K562 (cell line): ENCODE measurements at regions of chr22 and their contacts with region 1.

Region 1: GRCh38 chr22:23069502-23070357 is 589 bp upstream of the GNAZ start:
- DNase-seq: peak; percentile 52 to 100 (median 100)
- ATAC-seq: peak; percentile 95
- H3K4me3 ChIP-seq: peak overlapping the region; percentile 33
- H3K27ac ChIP-seq: no peak overlapping the region
- H3K4me1 ChIP-seq: peaks cover 4 to 22% of the 10 kb centered on the region in 2 experiments; a peak in 4 of 5 replicates
- H3K27me3 ChIP-seq: peaks cover 73 to 93% of the 10 kb centered on the region in 2 experiments
- CTCF ChIP-seq: peak in 2 of 3 experiments; percentile 34 to 50; a peak in 3 of 6 replicates
- EP300 ChIP-seq: no peak
- POLR2A ChIP-seq: no peak
- RAD21 ChIP-seq: peak in 1 of 2 experiments; percentile 21; a peak in 1 of 4 replicates

Region 2: GRCh38 chr22:22817468-22818201 is 252.1 kb before region 1 on chr22:
- CTCF ChIA-PET with region 1: no interaction called
- POLR2A ChIA-PET with region 1: no interaction called
- in situ Hi-C with region 1: no loop called
- intact Hi-C with region 1: no loop called
- DNase-seq: peak; percentile 59 to 82 (median 80)
- ATAC-seq: peak; percentile 43
- H3K4me3 ChIP-seq: no peak overlapping the region
- H3K27ac ChIP-seq: no peak overlapping the region
- H3K4me1 ChIP-seq: no peaks in the 10 kb centered on the region
- H3K27me3 ChIP-seq: peaks cover 19 to 53% of the 10 kb centered on the region in 2 experiments; a peak in 4 of 5 replicates
- CTCF ChIP-seq: no peak
- EP300 ChIP-seq: no peak
- POLR2A ChIP-seq: no peak
- RAD21 ChIP-seq: no peak

Region 3: DNA sequence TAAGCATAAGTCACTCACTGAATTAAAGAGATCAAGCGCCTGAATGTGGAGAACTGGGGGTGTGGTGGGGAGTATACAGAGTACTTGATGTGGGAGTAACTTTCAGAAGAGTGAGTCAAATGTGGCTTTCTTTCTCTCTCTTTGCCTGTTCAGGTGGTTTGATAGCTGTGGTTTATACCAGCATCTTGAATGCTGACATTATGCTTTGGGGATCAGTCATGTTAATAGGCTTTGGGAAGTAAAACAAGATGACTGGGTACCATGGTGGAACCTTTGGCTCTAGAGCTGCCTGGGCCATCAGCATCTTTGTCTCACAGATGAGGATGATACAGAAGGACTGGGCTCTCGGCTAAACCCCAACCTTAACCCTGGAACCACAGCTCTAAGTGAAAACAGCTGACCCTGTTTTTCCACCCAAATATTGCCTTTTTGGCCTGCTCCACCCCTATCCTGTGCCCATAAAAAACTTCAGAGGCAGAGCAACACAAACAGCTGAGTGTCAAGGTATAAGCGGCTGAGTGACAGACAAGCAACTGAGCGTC is 57.6 kb before region 1 on chr22:
- CTCF ChIA-PET with region 1: no interaction called
- POLR2A ChIA-PET with region 1: interaction called, 10 read pairs
- in situ Hi-C with region 1: no loop called
- intact Hi-C with region 1: no loop called
- DNase-seq: peak in 2 of 4 experiments; percentile 40 to 46
- ATAC-seq: no peak
- H3K4me3 ChIP-seq: no peak overlapping the region
- H3K27ac ChIP-seq: no peak overlapping the region
- H3K4me1 ChIP-seq: peaks cover 0 to 5% of the 10 kb centered on the region in 2 experiments; a peak in 2 of 5 replicates
- H3K27me3 ChIP-seq: peaks cover 42 to 52% of the 10 kb centered on the region in 2 experiments
- CTCF ChIP-seq: no peak
- EP300 ChIP-seq: no peak
- POLR2A ChIP-seq: no peak
- RAD21 ChIP-seq: no peak

Region 4: GRCh38 chr22:23054531-23055257 is 15.0 kb before region 1 on chr22:
- CTCF ChIA-PET with region 1: no interaction called
- POLR2A ChIA-PET with region 1: interaction called, 37 read pairs
- in situ Hi-C with region 1: no loop called
- intact Hi-C with region 1: no loop called
- DNase-seq: peak in 1 of 4 experiments; percentile 55
- ATAC-seq: no peak
- H3K4me3 ChIP-seq: no peak overlapping the region
- H3K27ac ChIP-seq: no peak overlapping the region
- H3K4me1 ChIP-seq: peaks cover 0 to 3% of the 10 kb centered on the region in 2 experiments; a peak in 1 of 5 replicates
- H3K27me3 ChIP-seq: peaks cover 9 to 36% of the 10 kb centered on the region in 2 experiments; a peak in 4 of 5 replicates
- CTCF ChIP-seq: no peak
- EP300 ChIP-seq: no peak
- POLR2A ChIP-seq: no peak
- RAD21 ChIP-seq: no peak

Region 5: GRCh38 chr22:23098718-23099530 is 29.2 kb after region 1 on chr22:
- CTCF ChIA-PET with region 1: no interaction called
- POLR2A ChIA-PET with region 1: interaction called, 16 read pairs
- in situ Hi-C with region 1: no loop called
- intact Hi-C with region 1: no loop called
- DNase-seq: peak in 2 of 4 experiments; percentile 63
- ATAC-seq: no peak
- H3K4me3 ChIP-seq: no peak overlapping the region
- H3K27ac ChIP-seq: no peak overlapping the region
- H3K4me1 ChIP-seq: peaks cover 0 to 45% of the 10 kb centered on the region in 2 experiments; a peak in 3 of 5 replicates
- H3K27me3 ChIP-seq: peaks cover 95 to 100% of the 10 kb centered on the region in 2 experiments
- CTCF ChIP-seq: no peak
- EP300 ChIP-seq: no peak
- POLR2A ChIP-seq: no peak
- RAD21 ChIP-seq: no peak

Region 6: DNA sequence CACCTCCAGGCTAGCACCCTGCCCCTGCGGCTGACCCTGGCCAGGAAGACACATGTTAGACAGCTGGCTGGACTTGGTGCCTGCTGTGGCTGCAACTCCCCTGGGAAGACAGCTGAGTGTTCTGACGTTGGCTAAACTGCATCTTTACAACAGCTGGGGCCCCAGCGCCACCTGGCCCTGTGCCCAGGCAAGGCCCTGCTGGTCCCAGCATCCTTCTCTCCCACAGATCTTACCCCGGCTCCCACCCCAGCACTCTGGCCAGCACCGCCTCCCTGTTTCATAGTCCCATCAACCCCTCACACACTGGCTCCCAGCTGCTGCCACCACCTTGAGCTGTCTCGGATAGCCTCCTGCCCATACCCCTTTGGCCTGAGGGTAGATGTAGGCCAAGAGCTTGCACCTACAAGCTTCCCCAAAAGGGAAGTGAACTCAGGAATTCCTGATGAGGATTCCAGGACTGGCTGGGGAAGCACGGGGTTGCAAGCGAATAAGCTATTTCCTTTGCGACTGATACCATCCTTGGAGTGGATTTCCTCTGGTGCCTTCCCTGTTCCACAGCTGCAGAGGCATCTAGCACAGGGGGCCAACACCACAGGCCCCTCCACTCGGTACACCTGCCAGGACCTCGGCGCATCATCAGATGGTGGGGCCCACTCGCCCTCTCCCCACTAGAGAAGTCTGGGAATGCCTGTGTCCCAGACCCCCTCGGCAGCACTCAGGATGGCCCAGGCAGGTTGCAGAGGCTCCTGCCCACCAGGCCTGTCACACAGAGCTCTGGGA is 43.5 kb after region 1 on chr22:
- CTCF ChIA-PET with region 1: no interaction called
- POLR2A ChIA-PET with region 1: interaction called, 28 read pairs
- in situ Hi-C with region 1: no loop called
- intact Hi-C with region 1: no loop called
- DNase-seq: peak in 3 of 4 experiments; percentile 52 to 63 (median 55)
- ATAC-seq: no peak
- H3K4me3 ChIP-seq: no peak overlapping the region
- H3K27ac ChIP-seq: no peak overlapping the region
- H3K4me1 ChIP-seq: peaks cover 0 to 20% of the 10 kb centered on the region in 2 experiments; a peak in 1 of 5 replicates
- H3K27me3 ChIP-seq: peaks cover 43 to 100% of the 10 kb centered on the region in 2 experiments; a peak in 4 of 5 replicates
- CTCF ChIP-seq: peak in 1 of 3 experiments; percentile 4; a peak in 1 of 6 replicates
- EP300 ChIP-seq: no peak
- POLR2A ChIP-seq: no peak
- RAD21 ChIP-seq: no peak

Region 7: GRCh38 chr22:23192181-23192957 is 122.6 kb after region 1 on chr22:
- CTCF ChIA-PET with region 1: no interaction called
- POLR2A ChIA-PET with region 1: no interaction called
- in situ Hi-C with region 1: no loop called
- intact Hi-C with region 1: no loop called
- DNase-seq: peak in 1 of 4 experiments; percentile 60
- ATAC-seq: peak; percentile 25
- H3K4me3 ChIP-seq: no peak overlapping the region
- H3K27ac ChIP-seq: no peak overlapping the region
- H3K4me1 ChIP-seq: peaks cover 13 to 15% of the 10 kb centered on the region in 2 experiments; a peak in 3 of 5 replicates
- H3K27me3 ChIP-seq: no peaks in the 10 kb centered on the region
- CTCF ChIP-seq: no peak
- EP300 ChIP-seq: no peak
- POLR2A ChIP-seq: no peak
- RAD21 ChIP-seq: no peak

Region 8: DNA sequence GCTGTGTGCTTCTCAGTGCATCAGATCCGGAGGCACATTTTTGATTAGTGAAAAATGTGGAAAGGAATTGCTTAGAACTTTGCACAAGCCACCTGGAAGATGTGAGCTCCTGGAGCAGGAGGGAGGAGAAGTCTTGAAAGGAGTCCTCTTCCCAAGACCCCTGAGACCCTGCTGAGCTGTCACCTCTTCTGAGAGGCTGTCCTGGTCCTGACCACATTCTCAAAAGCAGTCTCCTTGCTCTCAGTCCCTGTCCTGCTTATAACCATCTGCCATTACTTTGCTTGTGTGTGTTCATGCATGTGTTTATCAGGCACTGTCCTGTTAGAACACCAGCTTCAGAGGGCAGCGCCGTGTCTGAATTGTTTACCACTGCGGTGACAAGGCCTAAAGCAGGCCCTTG is 197.1 kb after region 1 on chr22:
- CTCF ChIA-PET with region 1: no interaction called
- POLR2A ChIA-PET with region 1: no interaction called
- in situ Hi-C with region 1: no loop called
- intact Hi-C with region 1: no loop called
- DNase-seq: peak in 3 of 4 experiments; percentile 60 to 64 (median 61)
- ATAC-seq: no peak
- H3K4me3 ChIP-seq: no peak overlapping the region
- H3K27ac ChIP-seq: no peak overlapping the region
- H3K4me1 ChIP-seq: peaks cover 4 to 44% of the 10 kb centered on the region in 2 experiments; a peak in 4 of 5 replicates
- H3K27me3 ChIP-seq: no peaks in the 10 kb centered on the region
- CTCF ChIP-seq: peak in 1 of 3 experiments; percentile 9; a peak in 1 of 6 replicates
- EP300 ChIP-seq: no peak
- POLR2A ChIP-seq: no peak
- RAD21 ChIP-seq: no peak